Dendritic cell treated with granulocyte-macrophage colony-stimulating factor and Interleukin-4, amounts not matched to agents 40 ng/mL and 50 ng/mL, for 4 days (primary cell): ENCODE measurements at regions of chr6 and their contacts with region 1.

Region 1: GRCh38 chr6:119349323-119350042 is at the start of gene MAN1A1:
- H3K4me3 Mint-ChIP-seq: peak within 1 kb of the TSS; percentile 89
- H3K27ac Mint-ChIP-seq: peak within 1 kb of the TSS; percentile 90
- H3K4me1 Mint-ChIP-seq: peaks cover 44% of the 10 kb centered on the region
- H3K27me3 Mint-ChIP-seq: peaks cover 5% of the 10 kb centered on the region

Region 2: GRCh38 chr6:118912646-118913045 is 436.8 kb before region 1 on chr6:
- intact Hi-C with region 1: no loop called
- H3K4me3 Mint-ChIP-seq: no peak overlapping the region
- H3K27ac Mint-ChIP-seq: no peak overlapping the region
- H3K4me1 Mint-ChIP-seq: no peaks in the 10 kb centered on the region
- H3K27me3 Mint-ChIP-seq: no peaks in the 10 kb centered on the region

Region 3: GRCh38 chr6:119147101-119148053 is 202.1 kb before region 1 on chr6:
- intact Hi-C with region 1: loop called (anchors 5 kb)
- H3K4me3 Mint-ChIP-seq: peak overlapping the region; percentile 17
- H3K27ac Mint-ChIP-seq: peak overlapping the region; percentile 82
- H3K4me1 Mint-ChIP-seq: peaks cover 38% of the 10 kb centered on the region
- H3K27me3 Mint-ChIP-seq: no peaks in the 10 kb centered on the region

Region 4: GRCh38 chr6:119533603-119534279 is 184.3 kb after region 1 on chr6:
- intact Hi-C with region 1: loop called (anchors 5 kb)
- H3K4me3 Mint-ChIP-seq: no peak overlapping the region
- H3K27ac Mint-ChIP-seq: peak overlapping the region; percentile 35
- H3K4me1 Mint-ChIP-seq: peaks cover 19% of the 10 kb centered on the region
- H3K27me3 Mint-ChIP-seq: no peaks in the 10 kb centered on the region

Region 5: DNA sequence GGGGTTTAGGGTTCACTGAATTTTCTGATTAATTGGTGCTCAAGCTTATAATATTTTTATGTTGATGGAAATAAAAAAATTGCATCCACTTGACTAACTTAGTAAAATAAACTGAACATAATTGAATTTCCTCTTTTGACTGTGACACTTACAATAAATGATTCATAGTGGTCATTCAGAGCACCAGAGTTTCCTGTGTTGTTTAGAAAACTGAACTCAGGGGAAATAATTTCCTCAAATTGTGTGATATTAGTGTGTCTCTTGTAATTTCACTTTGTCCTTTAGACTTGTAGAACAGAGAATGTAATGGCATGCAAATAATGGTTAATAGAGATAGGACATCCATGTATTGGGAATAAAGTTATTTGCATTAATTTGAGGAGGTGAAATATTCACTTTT is 319.7 kb after region 1 on chr6:
- intact Hi-C with region 1: loop called (anchors 5 kb)
- H3K4me3 Mint-ChIP-seq: no peak overlapping the region
- H3K27ac Mint-ChIP-seq: no peak overlapping the region
- H3K4me1 Mint-ChIP-seq: peaks cover 6% of the 10 kb centered on the region
- H3K27me3 Mint-ChIP-seq: peaks cover 4% of the 10 kb centered on the region

Region 6: GRCh38 chr6:120108061-120108795 is 758.7 kb after region 1 on chr6:
- intact Hi-C with region 1: no loop called
- H3K4me3 Mint-ChIP-seq: no peak overlapping the region
- H3K27ac Mint-ChIP-seq: no peak overlapping the region
- H3K4me1 Mint-ChIP-seq: no peaks in the 10 kb centered on the region
- H3K27me3 Mint-ChIP-seq: no peaks in the 10 kb centered on the region